Activated CD4-positive, alpha-beta T cell treated with anti-CD3 and anti-CD28 coated beads for 36 hours (primary cell): ENCODE measurements at regions of chr3 and their contacts with region 1.

Region 1: DNA sequence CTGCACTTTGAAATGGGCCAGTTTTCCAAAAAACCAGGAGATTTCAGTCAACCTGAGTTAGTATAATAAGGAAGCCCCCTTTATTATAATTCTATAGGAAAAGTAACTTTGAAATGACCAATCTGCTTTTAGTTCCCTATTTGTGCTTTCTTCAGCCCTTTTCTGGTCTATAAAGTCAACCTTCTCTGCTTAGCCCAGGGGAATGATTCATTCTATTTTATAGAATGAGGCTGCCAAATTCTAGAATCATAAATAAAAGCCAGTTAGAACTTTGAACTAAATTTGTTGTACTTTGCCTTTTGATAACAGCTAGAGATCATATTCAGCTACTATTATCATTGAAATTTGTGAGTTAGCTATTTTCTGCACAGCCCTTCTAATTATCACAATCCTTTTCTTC is 24.7 kb downstream of the CIP2A start:
- DNase-seq: no peak
- ATAC-seq: no peak
- H3K4me3 Mint-ChIP-seq: no peak overlapping the region
- H3K27ac Mint-ChIP-seq: no peak overlapping the region
- H3K4me1 Mint-ChIP-seq: no peaks in the 10 kb centered on the region
- H3K27me3 Mint-ChIP-seq: no peaks in the 10 kb centered on the region

Region 2: GRCh38 chr3:108528459-108529252 is 35.9 kb before region 1 on chr3:
- CTCF ChIA-PET with region 1: no interaction called
- POLR2A ChIA-PET with region 1: no interaction called
- intact Hi-C with region 1: no loop called
- DNase-seq: no peak
- ATAC-seq: no peak
- H3K4me3 Mint-ChIP-seq: no peak overlapping the region
- H3K27ac Mint-ChIP-seq: no peak overlapping the region
- H3K4me1 Mint-ChIP-seq: no peaks in the 10 kb centered on the region
- H3K27me3 Mint-ChIP-seq: peaks cover 13% of the 10 kb centered on the region

Region 3: DNA sequence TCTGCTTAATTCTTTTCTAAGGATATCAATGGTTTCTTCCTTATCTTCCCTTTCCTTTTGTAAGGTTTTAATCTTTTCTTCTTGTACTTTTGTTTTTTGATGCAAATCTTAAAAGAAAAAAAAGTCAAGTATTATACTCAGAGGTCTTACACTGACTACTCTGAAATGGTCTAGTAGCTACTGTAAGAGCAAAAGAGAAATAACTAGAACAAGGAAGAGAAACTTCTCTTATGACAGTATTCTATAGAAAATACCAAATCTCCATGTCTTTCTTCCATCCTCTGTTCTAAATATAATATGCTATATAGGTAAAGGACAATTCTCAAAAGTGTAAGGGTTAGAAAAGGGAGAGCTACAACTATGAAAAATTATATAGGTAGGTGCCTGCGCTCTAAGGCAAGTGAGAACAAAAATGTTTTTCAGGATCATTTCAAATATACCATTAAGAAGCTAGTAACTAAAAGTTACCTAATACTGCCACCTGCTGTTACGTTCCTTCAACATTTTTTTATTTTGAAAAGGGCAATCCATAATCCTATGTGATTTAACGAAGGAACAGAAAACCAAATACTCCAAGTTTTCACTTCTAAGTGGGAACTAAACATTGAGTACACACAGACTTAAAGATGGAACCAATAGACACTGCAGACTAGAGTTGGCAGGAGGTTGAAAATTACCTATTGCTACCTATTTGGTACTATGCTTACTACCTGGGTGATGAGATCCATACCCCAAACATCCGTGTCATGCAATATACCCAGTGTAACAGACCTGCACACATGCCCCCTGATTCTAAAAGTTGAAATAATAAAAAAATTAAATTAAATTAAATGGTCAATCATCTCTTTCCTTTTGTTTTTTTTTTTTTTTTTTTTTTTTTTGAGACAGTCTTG is 12.1 kb before region 1 on chr3:
- CTCF ChIA-PET with region 1: interaction called, 11 read pairs
- POLR2A ChIA-PET with region 1: no interaction called
- intact Hi-C with region 1: no loop called
- DNase-seq: no peak
- ATAC-seq: no peak
- H3K4me3 Mint-ChIP-seq: no peak overlapping the region
- H3K27ac Mint-ChIP-seq: no peak overlapping the region
- H3K4me1 Mint-ChIP-seq: peaks cover 4% of the 10 kb centered on the region
- H3K27me3 Mint-ChIP-seq: no peaks in the 10 kb centered on the region

Region 4: DNA sequence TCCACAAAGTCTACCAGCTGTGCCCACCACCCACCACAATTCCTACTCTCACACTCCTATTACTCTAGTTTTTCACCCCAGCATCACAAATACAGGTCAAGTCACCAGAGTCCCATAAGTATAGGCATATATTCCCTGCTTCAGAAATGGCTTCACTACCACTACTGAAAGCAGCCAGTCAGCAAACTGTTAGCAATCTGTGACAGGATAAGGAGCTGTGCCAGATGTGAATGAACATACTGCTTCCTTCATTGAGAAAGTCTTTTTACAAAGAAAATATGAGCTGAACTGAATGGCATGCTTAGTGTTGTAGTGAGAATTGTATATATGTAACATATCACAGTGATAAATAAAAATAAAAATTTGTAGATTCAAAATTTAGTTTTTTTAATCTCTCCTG is 648.8 kb after region 1 on chr3:
- CTCF ChIA-PET with region 1: no interaction called
- POLR2A ChIA-PET with region 1: no interaction called
- intact Hi-C with region 1: no loop called
- DNase-seq: no peak
- ATAC-seq: no peak
- H3K4me3 Mint-ChIP-seq: no peak overlapping the region
- H3K27ac Mint-ChIP-seq: no peak overlapping the region
- H3K4me1 Mint-ChIP-seq: no peaks in the 10 kb centered on the region
- H3K27me3 Mint-ChIP-seq: peaks cover 5% of the 10 kb centered on the region